Left cardiac atrium (tissue), 4 donors: ENCODE measurements at regions of chr11 and their contacts with region 1.

Region 1: DNA sequence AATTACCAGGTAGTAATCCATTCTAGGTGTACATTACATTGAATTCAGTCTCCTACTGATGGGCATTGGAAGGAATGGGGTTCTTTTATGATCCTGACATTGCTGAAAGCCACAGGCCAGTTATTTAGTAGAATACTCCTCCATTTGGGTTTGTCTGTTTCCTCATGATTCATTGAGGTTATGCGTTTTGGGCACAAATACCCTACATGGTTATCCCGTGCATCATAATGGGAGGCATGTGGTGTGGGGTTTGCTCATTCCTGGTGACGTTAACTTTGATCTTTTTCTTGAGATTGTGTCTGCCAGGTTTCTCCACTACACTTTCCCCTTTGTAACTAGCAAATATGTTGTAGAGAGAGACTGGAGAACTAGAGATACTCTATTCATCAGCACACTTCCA is 5.5 kb downstream of the FOLR3 start:
- DNase-seq: no peak
- ATAC-seq: no peak

Region 2: GRCh38 chr11:71977743-71978418 is 163.2 kb before region 1 on chr11:
- intact Hi-C with region 1: loop called in 1 of 2 experiments (anchors 10 kb)
- DNase-seq: no peak
- ATAC-seq: peak; percentile 65 to 76

Region 3: DNA sequence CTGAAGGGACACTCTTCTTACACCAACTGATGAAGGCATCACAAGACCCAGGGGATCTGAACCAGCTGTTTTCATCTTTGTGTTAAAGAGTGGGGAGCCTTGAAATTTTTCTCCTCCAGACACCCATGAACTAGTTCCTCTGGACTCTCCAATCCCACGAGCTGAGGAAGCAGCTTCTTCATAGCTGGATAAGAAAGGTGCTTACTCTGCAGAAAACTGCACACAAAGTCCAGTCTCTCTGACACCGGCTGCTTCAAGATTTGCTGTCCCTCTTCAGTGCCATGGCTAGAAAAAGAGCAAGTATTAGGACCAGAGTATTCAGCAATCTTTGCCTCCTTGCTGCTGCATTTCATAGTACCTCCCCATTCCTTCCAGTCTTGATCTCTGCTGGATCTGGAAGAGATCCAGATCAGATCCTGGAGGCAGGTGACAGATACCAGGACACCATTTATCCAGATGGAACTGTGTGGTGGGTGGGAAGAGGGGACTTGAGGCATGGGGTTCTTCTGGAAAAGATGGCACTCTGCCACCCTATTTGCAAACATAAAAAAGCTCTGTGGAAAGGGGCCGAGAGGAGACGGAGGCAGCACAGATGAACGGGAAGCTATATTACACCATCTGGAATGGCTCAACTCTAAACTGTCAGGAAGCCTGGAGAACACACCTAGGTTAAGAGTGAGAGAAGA is 116.9 kb before region 1 on chr11:
- intact Hi-C with region 1: loop called in 1 of 2 experiments (anchors 2 kb)
- DNase-seq: no peak
- ATAC-seq: no peak

Region 4: GRCh38 chr11:72696866-72697700 is 556.0 kb after region 1 on chr11:
- intact Hi-C with region 1: no loop called
- DNase-seq: peak; percentile 73
- ATAC-seq: peak; percentile 38 to 60